ENCODE measurements at regions of chr15 and their contacts with region 1.

Region 1: DNA sequence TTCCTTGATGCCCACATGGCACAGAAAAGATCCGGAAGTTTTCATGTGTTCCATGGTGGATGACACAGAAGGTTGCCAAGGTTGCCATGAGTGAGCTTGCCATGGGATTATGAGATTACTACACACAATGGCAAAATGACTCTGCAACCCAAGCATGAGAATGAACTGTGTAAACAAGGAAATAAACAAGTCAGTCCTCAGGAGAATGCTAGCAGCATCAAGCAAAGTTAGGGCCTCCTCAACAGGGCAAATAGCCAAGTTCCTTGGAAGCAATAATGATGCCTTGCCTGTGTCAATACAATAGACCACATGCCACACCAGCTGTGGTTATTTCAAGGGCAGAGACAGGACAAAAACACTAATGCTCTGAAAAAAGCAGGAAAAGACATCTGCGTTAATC is 41.8 kb downstream of the AQR start:
- DNase-seq: no peak
- H3K4me3 ChIP-seq: no peak overlapping the region
- CTCF ChIP-seq: no peak

Region 2: GRCh38 chr15:34621675-34622074 is 306.1 kb before region 1 on chr15:
- CTCF ChIA-PET with region 1: interaction called, 10 read pairs
- POLR2A ChIA-PET with region 1: no interaction called
- DNase-seq: no peak
- H3K4me3 ChIP-seq: no peak overlapping the region
- CTCF ChIP-seq: peak; percentile 28

Region 3: DNA sequence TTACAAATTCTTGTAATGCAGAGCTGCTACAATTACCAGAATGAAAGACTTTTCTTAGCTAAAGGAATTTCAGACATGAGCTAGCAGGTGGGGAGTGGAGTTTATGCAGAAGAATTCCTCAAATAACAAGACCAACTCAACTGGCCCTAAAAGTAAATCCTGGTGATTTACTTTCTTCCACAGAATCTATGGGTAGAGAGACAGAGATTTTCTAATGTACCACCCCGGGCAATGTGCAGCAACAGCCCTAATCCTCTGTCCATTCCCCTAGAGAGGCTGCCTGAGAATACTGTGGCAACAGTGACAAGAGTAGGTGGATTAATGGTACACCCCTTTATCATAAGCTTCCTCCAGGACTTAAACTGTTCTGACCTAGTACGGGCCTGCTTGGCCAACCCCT is 13.4 kb before region 1 on chr15:
- CTCF ChIA-PET with region 1: interaction called, 28 read pairs
- POLR2A ChIA-PET with region 1: no interaction called
- DNase-seq: no peak
- H3K4me3 ChIP-seq: no peak overlapping the region
- CTCF ChIP-seq: no peak

Region 4: GRCh38 chr15:34942363-34942762 is 14.6 kb after region 1 on chr15:
- CTCF ChIA-PET with region 1: interaction called, 34 read pairs
- POLR2A ChIA-PET with region 1: no interaction called
- DNase-seq: peak; percentile 16
- H3K4me3 ChIP-seq: no peak overlapping the region
- CTCF ChIP-seq: no peak

Measured in AG04449 (cell line).